Activated CD4-positive, alpha-beta T cell treated with anti-CD3 and anti-CD28 coated beads for 36 hours (primary cell): ENCODE measurements at regions of chr17 and their contacts with region 1.

Region 1: GRCh38 chr17:4375039-4375748 is 8.7 kb upstream of the UBE2G1 start:
- DNase-seq: peak; percentile 85
- ATAC-seq: peak; percentile 92
- H3K4me3 Mint-ChIP-seq: peak overlapping the region; percentile 29
- H3K27ac Mint-ChIP-seq: peak overlapping the region; percentile 80
- H3K4me1 Mint-ChIP-seq: peaks cover 21% of the 10 kb centered on the region
- H3K27me3 Mint-ChIP-seq: no peaks in the 10 kb centered on the region

Region 2: GRCh38 chr17:4394208-4395110 is 19.3 kb after region 1 on chr17:
- CTCF ChIA-PET with region 1: interaction called, 3 read pairs
- POLR2A ChIA-PET with region 1: no interaction called
- intact Hi-C with region 1: loop called (anchors 1 kb)
- DNase-seq: no peak
- ATAC-seq: no peak
- H3K4me3 Mint-ChIP-seq: no peak overlapping the region
- H3K27ac Mint-ChIP-seq: no peak overlapping the region
- H3K4me1 Mint-ChIP-seq: peaks cover 9% of the 10 kb centered on the region
- H3K27me3 Mint-ChIP-seq: no peaks in the 10 kb centered on the region

Region 3: GRCh38 chr17:4427505-4427904 is 52.3 kb after region 1 on chr17:
- CTCF ChIA-PET with region 1: no interaction called
- POLR2A ChIA-PET with region 1: interaction called, 14 read pairs
- intact Hi-C with region 1: no loop called
- DNase-seq: no peak
- ATAC-seq: no peak
- H3K4me3 Mint-ChIP-seq: no peak overlapping the region
- H3K27ac Mint-ChIP-seq: no peak overlapping the region
- H3K4me1 Mint-ChIP-seq: no peaks in the 10 kb centered on the region
- H3K27me3 Mint-ChIP-seq: no peaks in the 10 kb centered on the region

Region 4: DNA sequence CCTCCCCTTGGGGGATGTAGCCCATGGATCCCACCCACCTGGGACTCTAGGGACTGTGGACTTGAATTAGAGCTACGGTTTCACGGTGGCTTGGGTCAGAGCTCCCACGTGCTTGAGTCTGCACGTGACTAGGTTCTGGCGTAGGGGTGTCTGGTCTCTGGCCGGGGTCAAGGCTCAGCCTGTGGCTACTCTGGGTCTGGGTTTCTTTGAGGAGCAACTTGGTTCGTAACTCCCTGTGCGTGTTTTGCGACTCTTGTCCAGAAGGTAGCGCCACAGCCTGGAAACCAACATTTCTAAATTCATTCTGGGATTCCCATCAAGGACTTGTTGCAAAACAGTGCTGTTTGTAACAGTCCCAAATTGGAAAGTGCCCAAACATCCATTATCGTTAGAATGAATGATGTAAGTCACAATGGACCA is 185.7 kb after region 1 on chr17:
- CTCF ChIA-PET with region 1: no interaction called
- POLR2A ChIA-PET with region 1: no interaction called
- intact Hi-C with region 1: no loop called
- DNase-seq: no peak
- ATAC-seq: no peak
- H3K4me3 Mint-ChIP-seq: no peak overlapping the region
- H3K27ac Mint-ChIP-seq: peak overlapping the region; percentile 5
- H3K4me1 Mint-ChIP-seq: peaks cover 39% of the 10 kb centered on the region
- H3K27me3 Mint-ChIP-seq: no peaks in the 10 kb centered on the region